ENCODE measurements at regions of chr2 and their contacts with region 1.

Region 1: GRCh38 chr2:209423562-209424198 is at the start of gene MAP2:
- DNase-seq: peak; percentile 89
- H3K4me3 ChIP-seq: peak within 1 kb of the TSS; percentile 54
- H3K27ac ChIP-seq: no peak within 1 kb of the TSS
- H3K4me1 ChIP-seq: peaks cover 14% of the 10 kb centered on the region
- H3K27me3 ChIP-seq: no peaks in the 10 kb centered on the region
- CTCF ChIP-seq: peak; percentile 59
- total RNA-seq, gene MAP2: 1.7 and 2.0 TPM in 2 replicates

Region 2: GRCh38 chr2:208407667-208408066 is 1016.0 kb before region 1 on chr2:
- CTCF ChIA-PET with region 1: no interaction called
- POLR2A ChIA-PET with region 1: no interaction called
- intact Hi-C with region 1: loop called (anchors 5 kb)
- DNase-seq: peak; percentile 39
- H3K4me3 ChIP-seq: no peak overlapping the region
- H3K27ac ChIP-seq: no peak overlapping the region
- H3K4me1 ChIP-seq: no peaks in the 10 kb centered on the region
- H3K27me3 ChIP-seq: peaks cover 92% of the 10 kb centered on the region
- CTCF ChIP-seq: peak; percentile 42

Region 3: GRCh38 chr2:209191139-209191538 is 232.5 kb before region 1 on chr2:
- CTCF ChIA-PET with region 1: no interaction called
- POLR2A ChIA-PET with region 1: no interaction called
- intact Hi-C with region 1: no loop called
- DNase-seq: peak; percentile 12
- H3K4me3 ChIP-seq: no peak overlapping the region
- H3K27ac ChIP-seq: no peak overlapping the region
- H3K4me1 ChIP-seq: no peaks in the 10 kb centered on the region
- H3K27me3 ChIP-seq: peaks cover 8% of the 10 kb centered on the region
- CTCF ChIP-seq: no peak

Region 4: GRCh38 chr2:209556354-209556961 is 132.8 kb after region 1 on chr2:
- CTCF ChIA-PET with region 1: interaction called, 5 read pairs
- POLR2A ChIA-PET with region 1: no interaction called
- intact Hi-C with region 1: loop called (anchors 1 kb)
- DNase-seq: peak; percentile 59
- H3K4me3 ChIP-seq: no peak overlapping the region
- H3K27ac ChIP-seq: no peak overlapping the region
- H3K4me1 ChIP-seq: no peaks in the 10 kb centered on the region
- H3K27me3 ChIP-seq: no peaks in the 10 kb centered on the region
- CTCF ChIP-seq: peak; percentile 73

Measured in A673 (cell line).